Common myeloid progenitor, CD34-positive (primary cell): ENCODE measurements at regions of chr17 and their contacts with region 1.

Region 1: GRCh38 chr17:8016632-8017478 is 14.4 kb downstream of the GUCY2D start:
- DNase-seq: peak in 2 of 3 donors; percentile 77 to 78
- H3K4me3 ChIP-seq: peak overlapping the region; percentile 11 to 77 (median 65)
- H3K27ac ChIP-seq: no peak overlapping the region
- H3K4me1 ChIP-seq: peaks cover 7 to 65% (median 61%) of the 10 kb centered on the region in 4 experiments
- H3K27me3 ChIP-seq: peaks cover 0 to 3% (median 0%) of the 10 kb centered on the region in 5 experiments

Region 2: DNA sequence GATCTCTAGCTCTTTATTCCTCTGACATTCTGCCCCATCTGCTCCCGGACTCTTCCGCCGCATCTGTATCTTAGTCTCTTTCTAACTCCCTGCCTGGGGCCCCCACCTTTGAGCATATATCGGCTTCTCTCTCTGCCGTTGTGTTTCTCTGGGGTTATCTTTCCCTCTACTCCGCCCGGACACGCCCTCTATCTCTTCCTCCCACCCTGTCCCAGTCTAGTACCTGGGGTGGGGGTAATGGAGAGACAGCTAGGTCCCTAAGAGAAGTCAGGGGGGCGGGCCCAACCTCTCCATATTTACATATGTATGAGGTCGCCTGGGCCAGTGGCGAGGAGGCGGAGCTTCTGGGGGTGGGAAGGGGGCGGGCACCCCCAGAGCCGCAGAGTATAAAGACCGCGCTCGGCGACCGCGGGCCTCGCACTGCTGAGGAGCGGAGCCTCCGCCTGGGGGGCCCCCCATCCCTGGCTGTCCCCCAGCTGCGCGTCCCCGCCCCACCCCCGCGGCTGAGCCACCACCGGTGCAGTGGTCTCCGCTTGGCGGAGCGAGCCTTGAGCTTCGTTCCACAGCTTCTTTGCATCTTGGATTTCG is 366.3 kb before region 1 on chr17 and contains the start of gene ATP1B2:
- CTCF ChIA-PET with region 1: no interaction called
- POLR2A ChIA-PET with region 1: no interaction called
- DNase-seq: peak; percentile 81 to 86 (median 83)
- H3K4me3 ChIP-seq: peak within 1 kb of the TSS; percentile 16 to 73 (median 51)
- H3K27ac ChIP-seq: no peak within 1 kb of the TSS
- H3K4me1 ChIP-seq: peaks cover 0 to 18% (median 15%) of the 10 kb centered on the region in 4 experiments
- H3K27me3 ChIP-seq: peaks cover 0 to 47% (median 31%) of the 10 kb centered on the region in 5 experiments

Region 3: DNA sequence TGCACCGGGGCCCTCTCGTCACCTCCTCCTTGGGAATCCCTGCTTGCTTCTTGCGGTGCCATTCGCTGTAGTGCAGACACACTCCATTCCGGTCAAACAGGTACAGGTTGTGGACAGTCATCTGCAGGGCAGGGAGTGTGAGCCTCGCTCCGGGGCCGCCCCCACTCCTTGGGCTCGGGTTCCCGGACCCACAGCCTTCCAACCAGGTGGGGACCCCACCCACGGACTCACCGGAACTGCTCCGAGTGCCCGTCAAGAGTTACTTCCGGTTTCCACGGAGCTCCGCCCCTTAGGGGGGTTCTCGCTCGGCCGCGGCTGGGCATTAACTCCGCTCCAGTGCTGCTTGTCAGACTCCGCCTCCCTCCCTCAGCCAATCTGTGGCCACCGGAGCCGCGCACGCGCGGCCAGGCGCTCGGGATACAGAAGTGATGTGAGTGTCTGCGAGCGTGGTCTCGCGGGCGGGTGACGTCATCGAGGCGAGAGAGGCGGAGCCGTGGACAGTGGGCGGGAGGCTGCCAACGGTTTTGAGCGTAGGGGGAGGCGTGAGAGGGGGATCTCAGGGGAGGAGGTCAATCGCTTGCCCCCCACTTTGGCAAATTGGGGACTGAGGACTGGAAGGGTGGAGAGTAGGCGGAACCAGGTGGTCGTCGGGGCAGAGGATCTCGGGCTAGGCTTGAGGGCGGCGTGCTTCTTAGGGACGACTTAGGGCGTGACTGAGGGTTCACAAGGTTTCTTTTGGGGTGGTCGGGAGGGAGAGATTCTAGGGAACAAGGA is 85.0 kb before region 1 on chr17 and contains the starts of genes CNTROB and TRAPPC1:
- CTCF ChIA-PET with region 1: interaction called, 11 read pairs
- POLR2A ChIA-PET with region 1: interaction called, 3 read pairs
- DNase-seq: peak; percentile 99 to 100 (median 99)
- H3K4me3 ChIP-seq: peak within 1 kb of the TSS; percentile 50 to 98 (median 88)
- H3K27ac ChIP-seq: peak within 1 kb of the TSS; percentile 92 to 97
- H3K4me1 ChIP-seq: peaks cover 7 to 37% (median 24%) of the 10 kb centered on the region in 4 experiments
- H3K27me3 ChIP-seq: no peaks in the 10 kb centered on the region

Region 4: DNA sequence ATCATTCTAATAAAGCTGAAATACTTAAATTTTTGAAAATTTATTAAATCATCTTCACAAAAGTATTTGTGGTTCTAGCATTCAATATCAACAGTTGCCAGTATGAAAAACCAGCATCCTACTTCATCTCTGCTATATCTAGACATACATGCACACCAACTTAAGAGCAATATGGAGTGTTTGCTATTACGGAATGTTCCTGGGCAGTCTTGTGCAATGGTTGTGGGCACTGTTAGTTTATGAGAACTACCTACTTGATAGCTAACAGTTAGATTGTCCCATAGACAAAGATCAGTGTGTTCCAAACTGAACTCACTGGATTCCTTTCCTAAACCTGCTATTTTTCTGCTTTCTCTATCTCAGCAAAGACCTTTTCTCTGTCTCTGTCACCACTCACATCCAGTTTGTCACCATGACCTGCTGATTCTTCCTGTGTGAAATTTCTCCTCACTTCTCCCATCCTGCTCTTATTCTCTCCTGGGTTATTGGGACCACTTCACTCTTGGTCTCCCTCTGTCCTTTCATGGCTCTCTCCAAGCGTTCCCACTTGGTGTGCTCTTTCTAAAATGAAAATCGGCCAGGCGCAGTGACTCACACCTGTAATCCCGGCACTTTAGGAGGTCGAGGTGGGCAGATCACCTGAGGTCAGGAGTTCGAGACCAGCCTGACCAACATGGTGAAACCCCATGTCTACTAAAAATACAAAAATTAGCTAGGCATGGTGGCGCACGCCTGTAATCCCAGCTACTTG is 57.2 kb before region 1 on chr17:
- CTCF ChIA-PET with region 1: no interaction called
- POLR2A ChIA-PET with region 1: no interaction called
- DNase-seq: no peak
- H3K4me3 ChIP-seq: no peak overlapping the region
- H3K27ac ChIP-seq: no peak overlapping the region
- H3K4me1 ChIP-seq: no peaks in the 10 kb centered on the region
- H3K27me3 ChIP-seq: peaks cover 0 to 3% (median 0%) of the 10 kb centered on the region in 5 experiments

Region 5: DNA sequence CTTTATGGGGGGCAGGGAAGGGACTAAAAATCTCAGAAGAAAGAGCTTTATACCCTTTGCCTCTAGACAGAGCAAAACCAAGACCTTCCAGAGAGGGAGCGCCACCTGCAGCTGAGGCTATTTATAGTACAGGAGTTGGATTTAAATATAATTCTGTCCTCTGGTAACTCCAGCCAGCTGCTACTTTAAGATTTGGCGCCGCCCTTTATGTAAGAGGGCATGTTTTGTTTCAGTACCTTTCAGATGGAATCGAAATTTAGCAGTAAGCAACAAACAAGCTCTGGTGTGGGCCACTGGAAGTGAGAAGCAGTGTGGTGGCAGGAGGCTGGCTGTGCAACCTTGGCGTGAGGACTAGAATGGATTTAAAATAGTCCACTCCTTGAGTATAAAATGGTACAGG is 19.7 kb before region 1 on chr17:
- CTCF ChIA-PET with region 1: interaction called, 13 read pairs
- POLR2A ChIA-PET with region 1: interaction called, 4 read pairs
- DNase-seq: peak; percentile 57 to 83 (median 81)
- H3K4me3 ChIP-seq: peak overlapping the region in 1 of 7 experiments; percentile 30
- H3K27ac ChIP-seq: no peak overlapping the region
- H3K4me1 ChIP-seq: peaks cover 4 to 20% (median 15%) of the 10 kb centered on the region in 4 experiments
- H3K27me3 ChIP-seq: no peaks in the 10 kb centered on the region

Region 6: GRCh38 chr17:8029135-8029534 is 12.3 kb after region 1 on chr17:
- CTCF ChIA-PET with region 1: interaction called, 17 read pairs
- POLR2A ChIA-PET with region 1: no interaction called
- DNase-seq: no peak
- H3K4me3 ChIP-seq: no peak overlapping the region
- H3K27ac ChIP-seq: no peak overlapping the region
- H3K4me1 ChIP-seq: no peaks in the 10 kb centered on the region
- H3K27me3 ChIP-seq: peaks cover 0 to 5% (median 0%) of the 10 kb centered on the region in 5 experiments